Panc1 (cell line): ENCODE measurements at regions of chr18 and their contacts with region 1.

Region 1: DNA sequence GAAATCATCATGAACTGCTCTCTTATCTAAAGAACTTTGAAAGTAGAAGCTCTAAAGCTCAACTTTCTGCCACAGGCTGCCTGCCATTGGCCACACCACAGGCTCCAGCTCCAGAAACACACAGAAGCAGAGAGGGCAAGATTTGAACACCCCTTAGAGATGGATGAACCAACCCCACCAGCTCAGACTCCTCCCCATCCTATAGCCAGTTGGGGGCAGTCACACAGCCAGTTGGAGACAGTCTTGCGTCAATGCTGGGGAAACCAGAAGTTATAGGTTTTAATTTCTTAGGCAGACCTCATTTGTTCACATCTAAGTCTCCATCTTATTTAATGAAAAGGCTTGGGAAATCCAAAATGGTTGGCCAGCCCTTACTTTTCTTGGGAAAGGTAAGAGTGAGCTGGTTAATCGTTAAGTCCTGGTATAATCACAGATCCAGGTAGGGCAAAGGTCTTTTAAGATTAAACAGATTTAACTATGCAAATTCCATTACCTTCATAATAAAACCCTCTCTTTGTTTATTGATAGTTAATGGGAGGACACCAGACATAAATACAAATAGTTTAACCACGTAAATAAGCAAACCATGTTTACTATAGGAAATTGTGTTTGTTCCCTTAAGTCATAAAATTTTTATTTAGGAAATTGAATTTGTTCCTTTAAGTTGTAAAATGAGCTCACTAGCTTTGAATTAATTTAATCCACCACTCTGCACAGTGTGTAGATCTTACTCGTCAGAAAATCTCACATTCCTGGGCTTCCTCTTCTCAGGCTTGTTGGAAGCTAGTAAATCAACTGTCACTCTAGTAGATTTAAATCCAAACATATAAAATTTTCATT is 28.0 kb downstream of the MRO start:
- DNase-seq: no peak
- ATAC-seq: no peak
- H3K4me3 ChIP-seq: no peak overlapping the region
- H3K27ac ChIP-seq: no peak overlapping the region
- H3K4me1 ChIP-seq: no peaks in the 10 kb centered on the region
- H3K27me3 ChIP-seq: peaks cover 3% of the 10 kb centered on the region; the same call in 1 of the 2 replicates
- CTCF ChIP-seq: no peak

Region 2: DNA sequence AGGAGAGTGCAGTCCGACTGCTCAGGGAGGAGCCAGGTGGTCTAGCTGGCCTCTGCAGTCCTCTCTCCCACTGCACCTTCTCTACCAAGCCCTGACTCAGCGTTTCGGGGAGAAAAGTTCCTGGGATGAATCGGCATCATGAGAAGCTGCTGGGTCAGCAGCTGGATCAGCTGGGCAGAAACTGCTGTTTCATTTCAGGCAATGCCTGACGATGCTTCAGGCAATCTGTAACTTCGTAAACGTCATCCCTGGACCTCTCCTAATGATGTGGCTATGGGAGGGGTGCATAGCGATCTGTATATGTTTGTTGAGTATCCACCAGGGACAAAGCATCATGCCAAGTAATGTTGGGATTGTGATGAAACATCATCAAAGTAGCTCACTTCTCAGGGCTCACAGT is 1209.2 kb before region 1 on chr18:
- CTCF ChIA-PET with region 1: no interaction called
- POLR2A ChIA-PET with region 1: interaction called, 15 read pairs
- in situ Hi-C with region 1: no loop called
- intact Hi-C with region 1: no loop called
- DNase-seq: no peak
- ATAC-seq: peak; percentile 27; the same call in 1 of the 2 replicates
- H3K4me3 ChIP-seq: no peak overlapping the region
- H3K27ac ChIP-seq: no peak overlapping the region
- H3K4me1 ChIP-seq: no peaks in the 10 kb centered on the region
- H3K27me3 ChIP-seq: no peaks in the 10 kb centered on the region
- CTCF ChIP-seq: no peak

Region 3: DNA sequence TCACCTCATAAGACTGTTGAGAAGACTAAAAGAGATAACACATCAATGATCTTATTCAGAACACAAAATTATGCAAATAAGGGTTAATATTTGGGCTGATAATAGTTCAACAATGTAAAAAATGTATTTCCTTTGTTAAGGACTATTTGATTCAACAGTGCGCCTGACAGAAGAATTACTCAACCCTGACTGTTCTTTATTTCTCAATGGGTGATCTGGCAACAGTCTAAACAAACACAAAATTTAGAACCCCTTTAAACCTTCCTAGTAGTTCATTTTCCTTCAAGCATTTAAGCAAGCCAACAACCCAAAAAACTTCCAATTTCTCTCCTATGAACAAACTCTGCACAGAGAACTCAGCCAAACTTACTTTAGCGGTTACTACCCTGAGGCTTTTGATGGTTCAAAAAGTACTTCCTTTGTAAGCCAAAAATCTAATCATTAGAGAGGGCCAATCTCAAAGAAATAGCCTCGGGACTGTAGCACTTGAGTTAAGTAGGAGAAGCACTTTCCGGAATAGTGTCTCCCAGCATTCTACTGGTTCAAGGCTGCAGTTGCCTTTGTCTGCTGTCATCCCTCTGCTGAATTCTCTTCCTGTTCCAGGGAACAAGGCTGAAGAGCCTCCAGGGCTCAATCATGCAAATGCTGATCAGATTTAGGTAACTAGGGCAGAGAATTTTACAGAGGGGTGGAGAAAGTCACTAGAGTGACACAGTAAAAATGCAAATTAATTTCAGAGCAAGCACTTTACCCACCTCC is 272.9 kb before region 1 on chr18:
- CTCF ChIA-PET with region 1: no interaction called
- POLR2A ChIA-PET with region 1: no interaction called
- in situ Hi-C with region 1: no loop called
- intact Hi-C with region 1: loop called (anchors 10 kb)
- DNase-seq: no peak
- ATAC-seq: no peak
- H3K4me3 ChIP-seq: no peak overlapping the region
- H3K27ac ChIP-seq: no peak overlapping the region
- H3K4me1 ChIP-seq: no peaks in the 10 kb centered on the region
- H3K27me3 ChIP-seq: no peaks in the 10 kb centered on the region
- CTCF ChIP-seq: no peak

Region 4: DNA sequence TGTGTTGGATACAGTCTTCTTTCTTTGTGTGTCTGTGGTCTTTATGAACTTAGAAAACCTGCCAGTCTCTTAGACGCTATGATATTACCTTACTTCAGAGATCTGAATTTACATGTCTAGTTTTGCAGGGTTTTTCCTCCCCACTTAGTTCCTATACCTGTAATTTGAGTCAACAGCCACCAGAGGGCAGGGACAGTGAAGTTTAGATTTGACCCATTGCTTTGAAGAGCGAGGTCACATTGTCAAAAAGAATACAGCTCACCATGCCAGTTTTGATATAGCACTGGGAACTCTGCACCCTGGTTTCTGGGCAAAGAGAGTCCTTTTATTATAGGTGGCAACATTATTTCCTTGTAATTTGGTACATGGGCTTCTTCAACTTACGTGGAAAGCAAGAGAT is 129.6 kb before region 1 on chr18:
- CTCF ChIA-PET with region 1: no interaction called
- POLR2A ChIA-PET with region 1: no interaction called
- in situ Hi-C with region 1: no loop called
- intact Hi-C with region 1: loop called (anchors 5 kb)
- DNase-seq: no peak
- ATAC-seq: no peak
- H3K4me3 ChIP-seq: no peak overlapping the region
- H3K27ac ChIP-seq: no peak overlapping the region
- H3K4me1 ChIP-seq: no peaks in the 10 kb centered on the region
- H3K27me3 ChIP-seq: no peaks in the 10 kb centered on the region; the same call in 1 of the 2 replicates
- CTCF ChIP-seq: peak; percentile 59